ENCODE measurements at regions of chr17 and their contacts with region 1.

Region 1: DNA sequence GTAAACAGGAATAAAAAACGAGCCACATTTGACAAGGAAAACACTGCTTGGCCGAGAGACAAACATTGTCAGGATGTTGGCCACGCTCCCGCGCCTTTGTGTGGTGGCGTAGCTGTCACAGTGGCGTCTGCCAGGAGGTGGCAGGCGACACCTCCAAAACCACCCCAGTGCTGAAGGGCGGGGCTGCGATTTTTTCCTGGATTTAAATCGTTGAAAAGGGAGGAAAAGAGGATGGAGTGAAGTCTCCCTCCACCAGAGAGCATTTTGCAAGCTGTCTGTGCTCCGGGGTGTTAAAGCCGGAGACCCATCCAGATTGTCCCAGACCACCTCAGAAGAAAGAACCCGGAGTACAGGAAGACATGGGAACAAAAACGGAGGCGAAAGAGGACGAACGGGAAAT is 12.7 kb downstream of the MRM3 start:
- DNase-seq: peak; percentile 94
- H3K4me3 ChIP-seq: peak overlapping the region; percentile 35 to 38 (median 36)
- H3K27ac ChIP-seq: peak overlapping the region; percentile 58 to 79 (median 70)
- H3K4me1 ChIP-seq: peaks cover 11 to 52% (median 34%) of the 10 kb centered on the region in 4 donors
- H3K27me3 ChIP-seq: no peaks in the 10 kb centered on the region
- CTCF ChIP-seq: peak; percentile 88 to 93 (median 90)
- EP300 ChIP-seq: no peak
- POLR2A ChIP-seq: no peak

Region 2: GRCh38 chr17:850851-851763 is 56.2 kb after region 1 on chr17:
- intact Hi-C with region 1: loop called (anchors 10 kb)
- DNase-seq: no peak
- H3K4me3 ChIP-seq: peak overlapping the region; percentile 26 to 33 (median 30)
- H3K27ac ChIP-seq: peak overlapping the region; percentile 65 to 75 (median 66)
- H3K4me1 ChIP-seq: peaks cover 28 to 58% (median 50%) of the 10 kb centered on the region in 4 donors
- H3K27me3 ChIP-seq: no peaks in the 10 kb centered on the region
- CTCF ChIP-seq: no peak
- EP300 ChIP-seq: no peak
- POLR2A ChIP-seq: no peak

Region 3: GRCh38 chr17:979538-980405 is 184.9 kb after region 1 on chr17 and contains the start of gene NXN:
- intact Hi-C with region 1: loop called (anchors 1 kb)
- DNase-seq: peak; percentile 96
- H3K4me3 ChIP-seq: peak within 1 kb of the TSS; percentile 72 to 93 (median 81)
- H3K27ac ChIP-seq: peak within 1 kb of the TSS; percentile 84 to 94 (median 92)
- H3K4me1 ChIP-seq: peaks cover 24 to 57% (median 55%) of the 10 kb centered on the region in 4 donors
- H3K27me3 ChIP-seq: no peaks in the 10 kb centered on the region
- CTCF ChIP-seq: peak in 2 of 3 experiments; percentile 24 to 38
- EP300 ChIP-seq: no peak
- POLR2A ChIP-seq: peak; percentile 53
- total RNA-seq, gene NXN: 37.0 to 65.6 (median 49.8) TPM

Region 4: DNA sequence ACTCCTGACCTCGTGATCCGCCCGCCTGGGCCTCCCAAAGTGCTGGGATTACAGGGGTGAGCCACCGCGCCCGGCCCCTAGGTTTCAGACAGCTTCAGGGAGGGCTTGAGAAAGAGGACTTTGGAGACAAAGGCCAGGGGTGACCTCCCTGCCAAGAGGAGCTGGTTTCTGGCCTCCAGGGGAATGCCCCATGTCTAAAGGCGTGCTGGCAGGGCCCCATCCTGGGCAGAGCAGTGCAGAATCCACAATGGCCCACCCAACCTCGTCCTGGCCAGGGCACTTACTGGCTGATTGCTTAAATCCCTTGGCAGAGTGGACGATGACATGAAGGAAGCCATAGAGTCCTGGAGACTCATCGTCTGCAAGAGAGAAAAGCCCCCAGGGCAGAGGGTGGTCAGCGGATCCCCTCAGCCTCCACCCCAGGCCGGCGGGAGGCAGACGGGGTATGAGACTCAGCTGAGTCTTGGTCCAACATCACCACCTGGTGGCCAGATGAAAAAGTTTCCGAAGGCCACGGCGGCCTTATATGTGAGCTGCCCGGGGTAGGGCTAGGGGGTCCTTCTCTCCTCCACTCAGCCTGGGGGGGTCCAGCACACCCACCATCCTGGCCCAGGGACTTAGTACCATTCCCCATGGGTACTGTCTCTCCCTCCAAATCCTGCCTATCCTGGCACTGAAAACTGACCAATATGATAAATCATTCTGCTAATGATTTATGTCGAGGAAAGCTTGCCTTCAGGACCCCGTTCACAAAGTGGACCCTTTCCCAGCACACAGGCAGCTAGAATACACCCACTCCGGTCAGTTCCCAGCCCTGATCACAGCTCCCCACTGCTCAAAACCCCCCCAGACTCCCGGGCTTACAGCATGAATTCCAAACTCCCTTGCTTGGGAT is 261.1 kb after region 1 on chr17:
- intact Hi-C with region 1: loop called (anchors 2 kb)
- DNase-seq: peak; percentile 95
- H3K4me3 ChIP-seq: no peak overlapping the region
- H3K27ac ChIP-seq: peak overlapping the region; percentile 17 to 57 (median 36)
- H3K4me1 ChIP-seq: peaks cover 6 to 18% (median 15%) of the 10 kb centered on the region in 4 donors
- H3K27me3 ChIP-seq: no peaks in the 10 kb centered on the region
- CTCF ChIP-seq: peak; percentile 76 to 82 (median 81)
- EP300 ChIP-seq: no peak
- POLR2A ChIP-seq: no peak

Measured in esophagus muscularis mucosa (tissue), 4 donors.